Heart right ventricle (tissue), 16 donors: ENCODE measurements at regions of chr18 and their contacts with region 1.

Region 1: DNA sequence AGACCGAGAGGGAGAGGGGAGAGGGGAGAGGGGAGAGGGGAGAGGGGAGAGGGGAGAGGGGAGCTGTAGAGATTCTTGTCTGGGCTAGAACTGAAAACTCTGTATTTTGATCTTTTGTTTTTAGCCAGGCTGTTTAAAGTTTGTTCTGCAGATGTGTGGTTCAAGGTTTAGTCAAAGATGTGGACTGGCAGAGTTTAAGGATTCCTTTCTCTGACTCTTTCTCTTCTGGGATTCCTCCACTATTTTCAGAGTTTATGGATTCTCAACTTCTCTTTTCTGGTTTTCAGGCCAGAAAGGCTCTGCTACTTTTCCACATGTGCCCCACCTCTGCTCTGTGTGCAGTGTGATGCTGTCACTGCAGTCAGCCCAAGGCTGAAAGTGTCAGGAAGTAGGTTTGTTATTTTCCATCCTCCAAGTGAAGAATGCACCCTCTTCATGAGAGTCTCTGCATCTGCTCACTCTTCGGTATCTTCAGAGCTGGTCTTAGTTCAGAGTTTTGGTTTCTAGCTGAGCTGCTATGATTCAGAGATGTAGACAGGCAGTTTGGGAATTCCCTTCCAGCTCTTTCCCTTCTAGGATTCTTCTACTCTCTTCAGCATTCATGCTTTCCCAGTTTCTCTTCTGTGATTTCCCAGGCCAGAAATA is 130.9 kb upstream of the SMAD7 start:
- DNase-seq: no peak
- ATAC-seq: no peak
- H3K4me3 ChIP-seq: no peak overlapping the region
- H3K27ac ChIP-seq: no peak overlapping the region
- H3K4me1 ChIP-seq: peaks cover 0 to 4% (median 0%) of the 10 kb centered on the region in 9 donors
- H3K27me3 ChIP-seq: no peaks in the 10 kb centered on the region
- CTCF ChIP-seq: no peak

Region 2: GRCh38 chr18:48428475-48429177 is 653.0 kb before region 1 on chr18:
- intact Hi-C with region 1: no loop called
- DNase-seq: no peak
- ATAC-seq: peak in 6 of 8 donors; percentile 30 to 75 (median 58)
- H3K4me3 ChIP-seq: no peak overlapping the region
- H3K27ac ChIP-seq: no peak overlapping the region
- H3K4me1 ChIP-seq: no peaks in the 10 kb centered on the region
- H3K27me3 ChIP-seq: peaks cover 0 to 46% (median 28%) of the 10 kb centered on the region in 7 donors
- CTCF ChIP-seq: no peak

Region 3: GRCh38 chr18:48959921-48960920 is 121.4 kb before region 1 on chr18:
- intact Hi-C with region 1: no loop called
- DNase-seq: no peak
- ATAC-seq: no peak
- H3K4me3 ChIP-seq: no peak overlapping the region
- H3K27ac ChIP-seq: no peak overlapping the region
- H3K4me1 ChIP-seq: peaks cover 2 to 29% (median 21%) of the 10 kb centered on the region in 9 donors
- H3K27me3 ChIP-seq: no peaks in the 10 kb centered on the region
- CTCF ChIP-seq: no peak

Region 4: DNA sequence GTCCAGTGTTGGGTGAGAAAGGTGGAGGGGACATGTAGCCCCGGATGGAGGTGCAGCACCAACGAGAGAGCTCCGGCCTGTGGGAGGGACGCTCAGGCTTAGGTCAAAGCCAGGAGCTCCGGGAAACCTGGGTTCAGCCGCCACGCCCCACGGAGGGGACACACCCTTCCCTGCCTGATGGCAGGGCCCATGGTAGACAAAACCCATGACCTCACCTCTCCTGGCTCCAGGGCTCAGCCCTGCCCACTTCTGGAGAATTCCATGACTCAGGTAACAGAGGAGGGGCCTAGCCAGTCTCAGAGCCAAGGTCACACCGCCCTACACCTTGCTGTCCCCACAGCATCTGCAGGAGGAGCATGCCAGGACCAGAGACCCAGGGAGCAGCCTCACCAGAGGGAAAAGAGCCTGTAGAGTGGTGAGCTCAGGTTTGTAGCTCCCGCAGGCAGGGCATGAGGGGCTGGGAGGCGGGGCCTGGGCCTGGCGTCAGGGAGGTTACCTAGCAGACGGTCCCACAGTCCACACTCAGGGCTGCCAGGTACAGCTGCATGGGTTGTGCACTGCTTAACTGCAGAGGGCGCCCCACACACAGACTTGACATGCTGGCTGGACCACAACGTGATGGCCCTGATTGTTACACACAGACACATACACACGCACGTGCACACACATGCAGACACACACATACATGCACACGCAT is 60.1 kb before region 1 on chr18:
- intact Hi-C with region 1: loop called in 1 of 10 experiments (anchors 10 kb)
- DNase-seq: peak; percentile 34 to 35
- ATAC-seq: peak in 3 of 8 donors; percentile 29 to 35 (median 31)
- H3K4me3 ChIP-seq: no peak overlapping the region
- H3K27ac ChIP-seq: no peak overlapping the region
- H3K4me1 ChIP-seq: peaks cover 0 to 9% (median 0%) of the 10 kb centered on the region in 9 donors
- H3K27me3 ChIP-seq: no peaks in the 10 kb centered on the region
- CTCF ChIP-seq: peak in 7 of 9 donors; percentile 16 to 48 (median 39)

Region 5: DNA sequence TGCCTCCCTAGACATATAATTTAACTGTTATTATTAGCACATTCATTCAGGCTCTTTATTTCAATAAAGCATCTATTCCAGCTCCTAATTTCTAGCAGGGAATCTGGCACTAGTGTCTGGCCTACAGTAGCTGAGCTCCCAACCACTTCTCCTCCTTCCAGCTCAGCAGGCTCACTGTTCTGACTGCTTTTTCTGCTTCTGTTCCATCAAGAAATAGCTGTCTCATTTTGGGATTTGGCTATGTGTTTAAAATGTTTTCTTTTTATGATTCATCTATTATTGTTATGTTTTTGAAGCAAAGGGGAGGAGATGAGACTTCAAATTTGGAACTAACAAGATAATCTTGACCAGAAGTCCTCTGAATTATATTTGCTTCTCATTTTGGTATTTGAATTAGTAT is 41.8 kb after region 1 on chr18:
- intact Hi-C with region 1: loop called in 1 of 10 experiments (anchors 1 kb)
- DNase-seq: no peak
- ATAC-seq: no peak
- H3K4me3 ChIP-seq: no peak overlapping the region
- H3K27ac ChIP-seq: no peak overlapping the region
- H3K4me1 ChIP-seq: no peaks in the 10 kb centered on the region
- H3K27me3 ChIP-seq: no peaks in the 10 kb centered on the region
- CTCF ChIP-seq: no peak

Region 6: DNA sequence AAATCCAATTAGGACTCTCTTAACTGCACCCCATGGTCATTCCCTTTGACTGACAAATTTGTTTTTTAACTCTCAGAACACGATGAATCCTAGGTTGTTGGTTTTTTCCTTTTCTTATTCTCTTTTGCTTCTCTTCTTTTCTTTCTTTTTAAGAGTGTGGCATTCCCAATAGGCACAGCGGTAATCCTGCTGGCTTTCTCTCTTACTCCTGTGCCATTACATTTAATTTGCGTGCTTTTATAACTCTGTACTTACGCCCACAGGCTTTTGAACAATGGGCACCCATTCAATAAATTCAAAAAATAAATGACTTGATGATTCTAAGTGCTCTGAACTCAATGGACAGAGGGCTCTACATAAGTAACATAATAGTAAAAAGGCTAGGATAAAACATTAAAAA is 58.1 kb after region 1 on chr18:
- intact Hi-C with region 1: no loop called
- DNase-seq: no peak
- ATAC-seq: no peak
- H3K4me3 ChIP-seq: no peak overlapping the region
- H3K27ac ChIP-seq: no peak overlapping the region
- H3K4me1 ChIP-seq: peaks cover 0 to 18% (median 0%) of the 10 kb centered on the region in 9 donors
- H3K27me3 ChIP-seq: no peaks in the 10 kb centered on the region
- CTCF ChIP-seq: no peak